Posterior vena cava (tissue), 2 donors: ENCODE measurements at regions of chr15 and their contacts with region 1.

Region 1: GRCh38 chr15:25971053-25971452 is 107.9 kb upstream of the ATP10A start:
- DNase-seq: no peak

Region 2: GRCh38 chr15:26082221-26083109 is 111.4 kb after region 1 on chr15:
- intact Hi-C with region 1: loop called in 1 of 2 experiments (anchors 10 kb)
- DNase-seq: peak; percentile 98